AG04449 (cell line): ENCODE measurements at regions of chr1 and their contacts with region 1.

Region 1: DNA sequence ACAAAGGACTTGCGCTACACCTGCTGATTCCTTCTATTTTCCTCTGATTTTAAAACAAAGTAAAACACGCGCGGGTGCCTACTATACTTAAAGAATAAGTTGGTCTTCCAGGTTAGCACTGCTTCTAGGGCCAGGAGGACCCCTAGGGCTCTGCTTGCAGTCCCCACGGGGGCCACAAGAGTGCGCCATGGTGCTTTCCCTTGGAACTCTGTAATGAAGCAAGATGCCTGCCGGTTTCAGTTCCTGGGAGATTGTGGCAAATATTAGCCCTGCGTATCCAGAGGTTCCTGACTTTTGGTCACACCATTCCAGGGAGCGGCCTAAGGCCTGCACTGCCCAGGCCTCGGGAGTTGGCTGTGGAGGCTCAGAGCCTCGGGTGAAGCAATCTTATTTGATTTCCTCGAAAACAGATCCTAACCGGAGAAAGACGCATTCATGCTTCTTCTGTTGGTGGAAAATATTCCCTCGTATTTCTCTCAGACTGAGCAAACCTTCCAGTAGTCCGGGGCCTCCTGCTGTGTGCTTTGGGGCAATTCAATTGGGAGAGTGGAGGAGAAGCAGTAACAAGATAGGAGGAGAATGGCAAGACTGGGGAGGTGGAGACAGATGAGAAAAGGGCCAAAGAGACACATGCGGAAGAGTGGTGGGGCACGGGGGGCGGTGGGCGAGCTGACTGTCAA is 25.3 kb downstream of the ADAM30 start:
- DNase-seq: no peak
- H3K4me3 ChIP-seq: no peak overlapping the region
- CTCF ChIP-seq: peak; percentile 97

Region 2: GRCh38 chr1:119822406-119822805 is 48.7 kb before region 1 on chr1:
- CTCF ChIA-PET with region 1: no interaction called
- POLR2A ChIA-PET with region 1: no interaction called
- DNase-seq: no peak
- H3K4me3 ChIP-seq: no peak overlapping the region
- CTCF ChIP-seq: no peak

Region 3: DNA sequence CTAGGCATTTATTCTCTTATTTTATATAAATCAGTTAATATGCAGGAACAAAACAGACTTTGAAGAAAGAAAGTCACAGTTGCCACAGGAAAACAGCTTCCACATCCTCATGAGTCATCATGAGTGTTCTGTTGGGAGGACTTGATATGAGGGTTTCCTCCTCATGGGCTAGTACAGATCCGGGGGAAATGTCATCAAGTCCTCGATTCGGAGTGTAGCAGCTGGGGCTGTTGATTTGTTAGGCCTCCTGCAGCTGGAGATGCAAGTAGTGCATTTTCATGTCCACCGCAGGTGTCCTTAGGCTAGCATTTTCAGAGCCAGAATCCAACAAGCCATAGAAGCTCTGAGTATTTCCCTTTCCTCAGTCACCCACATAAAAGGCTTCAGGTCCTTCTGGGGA is 11.4 kb before region 1 on chr1:
- CTCF ChIA-PET with region 1: interaction called, 14 read pairs
- POLR2A ChIA-PET with region 1: no interaction called
- DNase-seq: no peak
- H3K4me3 ChIP-seq: no peak overlapping the region
- CTCF ChIP-seq: no peak

Region 4: GRCh38 chr1:119885903-119886783 is 15.1 kb after region 1 on chr1:
- CTCF ChIA-PET with region 1: interaction called, 33 read pairs
- POLR2A ChIA-PET with region 1: no interaction called
- DNase-seq: no peak
- H3K4me3 ChIP-seq: no peak overlapping the region
- CTCF ChIP-seq: peak; percentile 78

Region 5: GRCh38 chr1:119903443-119903835 is 32.4 kb after region 1 on chr1:
- CTCF ChIA-PET with region 1: no interaction called
- POLR2A ChIA-PET with region 1: no interaction called
- DNase-seq: peak; percentile 4
- H3K4me3 ChIP-seq: no peak overlapping the region
- CTCF ChIP-seq: no peak

Region 6: GRCh38 chr1:119924948-119925898 is 54.2 kb after region 1 on chr1:
- CTCF ChIA-PET with region 1: interaction called, 17 read pairs
- POLR2A ChIA-PET with region 1: no interaction called
- DNase-seq: no peak
- H3K4me3 ChIP-seq: no peak overlapping the region
- CTCF ChIP-seq: no peak